ENCODE measurements at regions of chr4 and their contacts with region 1.

Region 1: DNA sequence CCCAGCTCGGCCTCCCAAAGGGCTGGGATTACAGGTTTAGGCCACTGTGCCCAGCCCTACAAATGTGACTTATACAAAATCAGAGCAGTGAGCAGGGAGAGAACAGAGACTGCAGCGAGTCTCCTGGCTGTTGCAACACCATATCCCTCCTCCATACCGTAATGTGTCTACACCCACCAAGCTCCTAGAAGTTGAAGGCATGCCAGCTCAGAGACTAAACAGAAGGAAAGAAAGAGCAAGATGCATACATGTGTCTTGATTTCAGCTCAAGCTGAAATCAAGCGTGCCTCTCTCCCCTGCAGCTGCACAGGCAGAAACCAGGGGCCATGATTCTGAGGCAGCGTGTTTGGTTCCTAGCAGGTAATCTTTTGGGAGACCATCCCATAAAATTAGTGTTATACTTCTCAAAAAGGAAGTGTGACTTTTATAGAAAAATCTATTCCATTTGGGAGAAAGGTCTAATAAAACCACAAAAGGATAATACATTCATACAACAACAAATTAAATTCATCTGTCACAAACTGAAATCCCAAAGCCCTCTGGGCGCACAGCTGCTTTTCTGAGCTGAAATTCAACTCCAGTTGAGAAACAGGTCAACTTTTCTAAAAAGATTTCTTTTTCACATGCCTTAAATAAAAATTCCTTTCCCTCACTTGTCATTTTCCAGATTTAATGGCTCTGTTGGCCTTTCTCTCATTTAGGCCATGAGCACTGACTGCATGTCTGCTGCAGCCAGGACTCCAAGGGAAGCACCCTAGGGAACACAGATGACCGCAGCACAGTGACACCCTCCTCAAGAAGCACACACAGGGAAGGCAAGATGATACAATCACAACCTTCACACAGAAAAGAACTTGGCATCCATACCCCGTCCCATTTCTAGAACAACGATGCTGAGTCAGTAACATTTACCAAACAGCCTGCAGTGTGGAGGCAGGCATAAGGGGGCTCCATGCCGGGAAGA is 34.4 kb downstream of the AFAP1 start:
- DNase-seq: peak; percentile 89

Region 2: GRCh38 chr4:7843831-7844593 is 61.2 kb before region 1 on chr4:
- intact Hi-C with region 1: loop called in 1 of 2 experiments (anchors 10 kb)
- DNase-seq: peak; percentile 92

Region 3: GRCh38 chr4:8940792-8941491 is 1035.7 kb after region 1 on chr4:
- intact Hi-C with region 1: no loop called
- DNase-seq: no peak

Measured in posterior vena cava (tissue), 2 donors.